GM12878 (cell line): ENCODE measurements at regions of chr10 and their contacts with region 1.

Region 1: DNA sequence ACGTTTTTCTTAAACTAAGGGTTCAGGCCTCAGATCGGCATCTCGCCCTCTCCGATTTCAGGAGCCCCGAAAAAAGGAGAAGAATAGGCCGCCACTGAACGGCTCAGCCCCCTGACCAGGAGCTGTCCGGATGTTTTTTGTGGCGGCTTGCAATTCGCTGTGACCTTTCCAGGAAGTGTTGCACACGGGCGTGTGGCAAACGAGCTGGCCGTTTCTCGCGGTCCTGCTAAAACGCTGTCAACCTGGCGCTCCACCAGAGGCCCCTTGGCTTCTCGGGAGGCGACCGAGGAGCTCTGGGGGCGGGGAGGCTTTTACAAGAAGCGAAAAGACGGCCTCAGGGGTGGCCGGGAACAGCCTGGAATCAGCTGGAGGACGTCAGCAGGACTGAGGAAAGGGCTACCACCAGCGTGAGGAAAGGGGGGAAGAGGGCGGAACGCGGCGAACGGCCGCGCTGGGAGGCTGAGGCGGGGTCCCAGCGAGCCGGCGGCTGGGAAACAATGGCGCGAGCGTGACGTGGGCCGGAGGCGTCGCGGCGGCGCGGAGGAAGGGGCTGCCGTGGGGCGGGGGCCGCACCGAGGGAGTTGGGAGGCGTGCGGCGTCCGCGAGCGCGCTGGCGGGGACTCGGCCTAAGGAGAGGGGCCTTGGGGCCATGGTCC is 493 bp downstream of the NT5C2 start:
- DNase-seq: no peak
- ATAC-seq: peak; percentile 82
- H3K4me3 ChIP-seq: peak overlapping the region; percentile 85
- H3K27ac ChIP-seq: peak overlapping the region; percentile 92
- H3K4me1 ChIP-seq: peaks cover 7% of the 10 kb centered on the region
- H3K27me3 ChIP-seq: no peaks in the 10 kb centered on the region
- CTCF ChIP-seq: no peak
- EP300 ChIP-seq: no peak
- POLR2A ChIP-seq: peak; percentile 71
- RAD21 ChIP-seq: no peak

Region 2: GRCh38 chr10:103125323-103126267 is 67.0 kb before region 1 on chr10:
- CTCF ChIA-PET with region 1: no interaction called
- POLR2A ChIA-PET with region 1: interaction called, 11 read pairs
- RAD21 ChIA-PET with region 1: interaction called, 7 read pairs
- SMC1A ChIA-PET with region 1: interaction called, 21 read pairs
- in situ Hi-C with region 1: no loop called
- intact Hi-C with region 1: loop called (anchors 5 kb)
- DNase-seq: peak; percentile 87
- ATAC-seq: peak; percentile 96
- H3K4me3 ChIP-seq: peak overlapping the region; percentile 21
- H3K27ac ChIP-seq: peak overlapping the region; percentile 67
- H3K4me1 ChIP-seq: peaks cover 17% of the 10 kb centered on the region
- H3K27me3 ChIP-seq: no peaks in the 10 kb centered on the region
- CTCF ChIP-seq: no peak
- EP300 ChIP-seq: peak; percentile 89 to 90
- POLR2A ChIP-seq: no peak
- RAD21 ChIP-seq: no peak

Region 3: DNA sequence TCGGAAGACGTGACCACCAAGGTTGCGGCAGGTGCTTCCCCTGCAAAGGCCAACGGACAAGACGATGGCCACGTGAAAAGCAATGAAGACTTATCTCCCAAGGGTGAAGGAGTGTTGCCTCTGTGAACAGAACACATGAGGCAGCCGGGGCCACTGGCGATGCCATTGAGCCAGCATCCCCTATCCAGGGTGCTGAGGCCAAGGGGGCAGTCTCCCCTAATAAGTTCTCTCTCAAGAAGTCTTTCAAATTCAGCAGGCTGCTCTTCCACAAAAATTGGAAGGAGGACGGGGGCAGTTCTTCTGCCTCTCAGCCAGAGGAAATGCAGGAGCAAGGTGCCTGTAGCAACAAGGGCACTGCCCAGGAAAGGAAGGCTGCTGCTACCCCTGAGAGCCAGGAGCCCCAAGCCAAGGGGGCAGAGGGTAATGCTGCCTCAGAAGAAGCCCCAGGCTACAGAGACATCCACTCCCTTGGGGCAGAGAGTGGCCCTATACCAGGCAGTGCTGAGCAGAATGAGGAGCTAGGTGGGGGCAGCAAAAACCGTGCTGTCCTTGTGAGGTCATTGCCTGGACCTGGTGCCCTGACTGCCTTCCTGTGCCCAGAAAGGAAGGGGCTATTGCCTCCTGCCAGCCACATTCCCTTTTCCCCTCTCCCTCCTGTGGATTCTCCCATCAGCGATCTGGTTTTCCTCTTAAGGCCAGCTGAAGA is 16.8 kb before region 1 on chr10:
- CTCF ChIA-PET with region 1: interaction called, 3 read pairs
- POLR2A ChIA-PET with region 1: interaction called, 59 read pairs
- RAD21 ChIA-PET with region 1: interaction called, 31 read pairs
- SMC1A ChIA-PET with region 1: interaction called, 68 read pairs
- in situ Hi-C with region 1: no loop called
- intact Hi-C with region 1: no loop called
- DNase-seq: no peak
- ATAC-seq: no peak
- H3K4me3 ChIP-seq: no peak overlapping the region
- H3K27ac ChIP-seq: no peak overlapping the region
- H3K4me1 ChIP-seq: no peaks in the 10 kb centered on the region
- H3K27me3 ChIP-seq: no peaks in the 10 kb centered on the region
- CTCF ChIP-seq: no peak
- EP300 ChIP-seq: no peak
- POLR2A ChIP-seq: 0 out of 2 replicates have a peak, but pooled peaks have one; percentile 6
- RAD21 ChIP-seq: no peak

Region 4: DNA sequence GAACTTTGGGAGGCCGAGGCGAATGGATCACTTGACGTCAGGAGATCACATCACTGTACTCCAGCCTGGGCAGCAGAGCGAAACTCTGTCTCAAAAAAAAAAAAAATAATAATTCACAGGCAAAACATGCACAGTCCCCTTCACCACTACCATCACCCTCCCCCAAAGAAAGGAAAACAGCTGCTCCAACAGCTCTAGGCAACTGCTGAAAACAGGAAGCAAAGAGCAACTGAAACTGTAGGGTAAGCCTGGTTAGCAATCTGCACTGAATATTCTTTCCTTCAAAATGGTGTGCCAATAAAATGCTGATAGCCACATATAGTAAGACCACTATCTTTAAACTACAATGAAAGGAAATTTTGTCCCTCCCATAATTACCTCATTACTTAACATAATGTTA is 11.3 kb before region 1 on chr10:
- CTCF ChIA-PET with region 1: interaction called, 25 read pairs
- POLR2A ChIA-PET with region 1: interaction called, 59 read pairs
- RAD21 ChIA-PET with region 1: interaction called, 31 read pairs
- SMC1A ChIA-PET with region 1: interaction called, 68 read pairs
- in situ Hi-C with region 1: no loop called
- intact Hi-C with region 1: no loop called
- DNase-seq: peak; percentile 45
- ATAC-seq: peak; percentile 83
- H3K4me3 ChIP-seq: no peak overlapping the region
- H3K27ac ChIP-seq: peak overlapping the region; percentile 63
- H3K4me1 ChIP-seq: peaks cover 14% of the 10 kb centered on the region
- H3K27me3 ChIP-seq: no peaks in the 10 kb centered on the region
- CTCF ChIP-seq: no peak
- EP300 ChIP-seq: peak in 1 of 2 experiments; percentile 44; a peak in 1 of 4 replicates
- POLR2A ChIP-seq: no peak
- RAD21 ChIP-seq: no peak

Region 5: DNA sequence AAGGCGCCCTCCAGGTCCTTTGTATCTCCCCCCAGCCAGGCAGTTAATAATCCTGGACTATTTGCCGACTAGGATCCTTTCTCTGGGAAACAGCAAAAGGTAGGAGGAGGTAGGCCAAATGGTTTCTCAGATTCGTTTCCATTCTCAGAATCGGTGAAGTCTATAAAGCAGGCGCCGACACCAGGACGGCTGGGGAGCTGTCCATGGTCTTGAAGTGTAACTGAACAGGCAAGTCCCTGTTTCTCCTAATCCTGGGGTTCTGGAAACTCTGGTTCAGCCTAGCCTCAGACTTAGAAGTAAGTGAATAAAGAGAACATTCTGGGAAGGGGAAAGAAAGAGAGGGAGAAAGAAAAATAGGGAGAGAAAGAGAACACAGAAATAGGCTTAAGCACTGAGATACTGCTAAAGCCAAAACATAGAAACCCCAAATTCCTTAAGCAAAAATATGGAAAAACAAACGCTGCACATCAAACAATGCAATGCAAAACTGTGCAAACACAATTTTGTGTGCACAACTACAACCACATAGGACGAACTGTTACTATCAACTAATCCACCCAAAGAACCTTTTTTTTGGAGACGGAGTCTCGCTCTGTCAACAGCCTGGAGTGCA is 73.2 kb after region 1 on chr10:
- CTCF ChIA-PET with region 1: no interaction called
- POLR2A ChIA-PET with region 1: no interaction called
- RAD21 ChIA-PET with region 1: no interaction called
- SMC1A ChIA-PET with region 1: no interaction called
- in situ Hi-C with region 1: no loop called
- intact Hi-C with region 1: no loop called
- DNase-seq: no peak
- ATAC-seq: no peak
- H3K4me3 ChIP-seq: no peak overlapping the region
- H3K27ac ChIP-seq: no peak overlapping the region
- H3K4me1 ChIP-seq: no peaks in the 10 kb centered on the region
- H3K27me3 ChIP-seq: no peaks in the 10 kb centered on the region; a peak in 1 of 4 replicates
- CTCF ChIP-seq: no peak
- EP300 ChIP-seq: no peak
- POLR2A ChIP-seq: no peak
- RAD21 ChIP-seq: no peak